SK-N-SH (cell line): ENCODE measurements at regions of chr10 and their contacts with region 1.

Region 1: DNA sequence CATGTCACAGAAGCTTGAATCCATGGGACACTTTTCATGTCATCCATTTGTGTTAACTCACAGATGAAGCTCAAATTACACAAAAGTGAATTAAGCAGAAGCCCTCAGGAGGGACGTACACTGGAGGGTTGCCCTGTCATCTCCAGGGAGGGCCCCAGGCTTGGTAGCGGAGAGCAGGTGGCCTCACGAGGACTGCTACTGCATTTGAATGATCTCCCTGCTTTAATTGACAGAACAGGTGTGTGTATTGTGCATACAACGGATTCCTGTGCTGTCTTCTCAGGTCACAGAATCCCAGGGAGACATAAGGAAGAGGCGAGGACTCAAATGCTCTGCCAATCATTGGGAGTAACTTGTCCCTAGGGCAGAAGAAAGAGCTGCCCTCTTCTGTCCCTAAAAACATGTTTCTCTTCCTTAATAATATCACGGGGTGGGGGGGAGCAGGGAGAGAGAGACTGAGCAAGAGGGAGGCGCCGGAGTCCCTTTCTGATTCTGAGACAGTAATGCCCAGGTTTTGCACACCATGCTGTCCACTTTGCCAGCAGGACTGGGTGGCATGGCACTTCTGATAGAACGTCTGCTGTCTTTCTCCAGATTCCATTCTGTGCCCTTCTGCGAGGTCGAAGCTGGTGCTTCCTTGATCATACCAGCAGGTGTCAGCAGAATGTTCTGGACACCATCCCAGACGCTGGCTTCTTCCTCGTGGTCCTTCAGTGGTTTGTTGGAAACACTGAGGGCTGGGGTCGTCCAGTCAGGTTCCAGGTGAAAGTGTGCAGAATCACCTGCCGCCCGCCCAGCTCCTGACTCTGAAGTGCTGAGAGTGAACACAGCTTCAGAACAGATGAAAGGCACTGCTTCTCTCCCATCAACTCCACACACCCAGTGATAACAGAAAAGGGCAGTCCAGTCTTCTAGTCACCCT is 26.2 kb upstream of the RASGEF1A start:
- DNase-seq: peak; percentile 78
- H3K4me3 ChIP-seq: no peak overlapping the region
- H3K27ac ChIP-seq: no peak overlapping the region
- H3K4me1 ChIP-seq: peaks cover 0 to 4% of the 10 kb centered on the region in 2 experiments; a peak in 1 of 4 replicates
- H3K27me3 ChIP-seq: peaks cover 15% of the 10 kb centered on the region; the same call in 1 of the 2 replicates
- CTCF ChIP-seq: peak; percentile 69
- EP300 ChIP-seq: no peak
- RAD21 ChIP-seq: peak; percentile 80

Region 2: GRCh38 chr10:43190775-43191174 is 102.2 kb before region 1 on chr10:
- CTCF ChIA-PET with region 1: no interaction called
- POLR2A ChIA-PET with region 1: no interaction called
- DNase-seq: no peak
- H3K4me3 ChIP-seq: no peak overlapping the region
- H3K27ac ChIP-seq: 0 out of 4 replicates have a peak overlapping the region, but pooled peaks of 1 of the 2 experiments have one; percentile 11
- H3K4me1 ChIP-seq: peaks cover 0 to 9% of the 10 kb centered on the region in 2 experiments; a peak in 3 of 4 replicates
- H3K27me3 ChIP-seq: no peaks in the 10 kb centered on the region
- CTCF ChIP-seq: no peak
- EP300 ChIP-seq: no peak
- RAD21 ChIP-seq: no peak

Region 3: DNA sequence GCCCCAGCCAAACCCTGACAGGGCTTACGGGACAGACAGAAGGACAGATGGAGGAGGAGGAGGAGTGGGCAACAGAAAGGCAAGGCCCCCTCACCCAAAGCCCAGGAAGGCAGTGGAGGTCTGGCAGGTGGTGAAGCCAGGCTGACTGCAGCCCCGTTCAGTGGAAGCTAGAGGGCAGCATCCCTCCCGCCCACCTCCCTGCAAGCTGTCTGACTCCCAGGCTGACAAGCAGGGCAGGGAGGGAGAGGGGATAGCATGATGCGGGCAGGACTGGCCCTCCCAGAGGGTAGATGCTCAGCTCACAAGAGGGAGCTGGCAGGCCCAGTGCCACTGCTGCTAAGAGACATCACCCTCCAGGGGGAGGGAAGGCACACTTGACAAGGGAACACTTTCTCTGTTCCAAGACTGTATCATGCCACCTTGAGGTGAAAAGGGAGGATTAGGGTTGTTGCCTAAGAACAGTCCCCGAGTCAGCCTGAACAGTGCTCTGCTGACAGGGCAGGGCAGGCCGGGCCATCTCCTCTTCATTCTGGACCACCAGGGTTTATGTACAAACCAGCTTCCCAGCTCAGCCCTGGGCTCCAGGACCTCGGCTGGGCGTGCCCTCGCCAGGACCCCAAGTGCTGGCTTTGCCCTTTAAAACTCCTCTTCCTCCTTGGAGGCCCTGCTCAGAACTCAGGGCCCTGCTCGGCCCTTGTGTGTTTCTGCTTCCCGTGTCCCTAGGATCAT is 87.9 kb before region 1 on chr10:
- CTCF ChIA-PET with region 1: interaction called, 17 read pairs
- POLR2A ChIA-PET with region 1: no interaction called
- DNase-seq: peak; percentile 84
- H3K4me3 ChIP-seq: peak overlapping the region in 1 of 2 experiments; percentile 43; a peak in 1 of 4 replicates
- H3K27ac ChIP-seq: no peak overlapping the region
- H3K4me1 ChIP-seq: no peaks in the 10 kb centered on the region; a peak in 1 of 4 replicates
- H3K27me3 ChIP-seq: no peaks in the 10 kb centered on the region
- CTCF ChIP-seq: peak; percentile 65
- EP300 ChIP-seq: no peak
- RAD21 ChIP-seq: peak; percentile 50

Region 4: GRCh38 chr10:43267811-43268210 is 25.2 kb before region 1 on chr10:
- CTCF ChIA-PET with region 1: interaction called, 17 read pairs
- POLR2A ChIA-PET with region 1: no interaction called
- DNase-seq: no peak
- H3K4me3 ChIP-seq: no peak overlapping the region
- H3K27ac ChIP-seq: no peak overlapping the region
- H3K4me1 ChIP-seq: peaks cover 0 to 3% of the 10 kb centered on the region in 2 experiments; a peak in 1 of 4 replicates
- H3K27me3 ChIP-seq: peaks cover 56% of the 10 kb centered on the region
- CTCF ChIP-seq: no peak
- EP300 ChIP-seq: no peak
- RAD21 ChIP-seq: no peak

Region 5: DNA sequence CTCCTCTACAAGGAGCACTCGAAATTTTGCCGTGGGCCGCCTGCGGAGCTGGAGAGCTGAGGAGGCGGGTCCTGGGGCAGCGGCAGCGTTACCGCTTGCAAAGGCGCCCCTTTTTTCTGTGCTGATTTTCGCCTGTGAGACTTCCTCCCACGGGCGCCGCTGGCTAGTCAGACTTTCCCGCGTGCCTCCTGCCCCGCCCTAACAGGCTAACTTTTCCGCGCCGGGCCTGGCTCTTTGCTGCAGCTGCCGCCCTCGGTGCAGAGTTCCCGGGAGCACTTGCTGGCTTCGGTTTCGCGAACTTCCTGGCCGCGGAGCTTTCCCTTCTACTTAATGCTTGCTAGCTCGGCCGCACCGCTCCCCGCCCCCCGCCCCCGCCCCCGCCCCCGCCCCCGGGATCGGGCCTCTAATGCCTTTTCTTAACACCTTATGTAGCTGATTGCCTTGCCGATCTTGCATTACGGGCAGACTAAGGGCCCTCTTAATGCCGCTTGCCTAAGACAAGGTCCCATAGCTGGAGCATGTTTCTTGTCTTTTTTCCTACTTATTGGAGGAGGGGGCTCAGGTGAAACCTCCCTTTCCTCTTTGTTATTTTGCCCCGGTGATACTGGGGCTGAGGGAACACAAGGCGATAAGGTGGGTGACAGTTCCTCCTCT is 11.8 kb after region 1 on chr10:
- CTCF ChIA-PET with region 1: interaction called, 31 read pairs
- POLR2A ChIA-PET with region 1: no interaction called
- DNase-seq: peak; percentile 62
- H3K4me3 ChIP-seq: peak overlapping the region; percentile 39 to 52; a peak in 3 of 4 replicates
- H3K27ac ChIP-seq: no peak overlapping the region
- H3K4me1 ChIP-seq: no peaks in the 10 kb centered on the region; a peak in 1 of 4 replicates
- H3K27me3 ChIP-seq: peaks cover 36% of the 10 kb centered on the region
- CTCF ChIP-seq: no peak
- EP300 ChIP-seq: no peak
- RAD21 ChIP-seq: no peak

Region 6: GRCh38 chr10:43461950-43462349 is 168.9 kb after region 1 on chr10:
- CTCF ChIA-PET with region 1: interaction called, 22 read pairs
- POLR2A ChIA-PET with region 1: no interaction called
- DNase-seq: peak; percentile 71
- H3K4me3 ChIP-seq: peak overlapping the region in 1 of 2 experiments; percentile 6; a peak in 1 of 4 replicates
- H3K27ac ChIP-seq: no peak overlapping the region
- H3K4me1 ChIP-seq: no peaks in the 10 kb centered on the region
- H3K27me3 ChIP-seq: no peaks in the 10 kb centered on the region
- CTCF ChIP-seq: peak; percentile 82
- EP300 ChIP-seq: no peak
- RAD21 ChIP-seq: peak; percentile 86